ENCODE measurements at regions of chr17 and their contacts with region 1.

Region 1: DNA sequence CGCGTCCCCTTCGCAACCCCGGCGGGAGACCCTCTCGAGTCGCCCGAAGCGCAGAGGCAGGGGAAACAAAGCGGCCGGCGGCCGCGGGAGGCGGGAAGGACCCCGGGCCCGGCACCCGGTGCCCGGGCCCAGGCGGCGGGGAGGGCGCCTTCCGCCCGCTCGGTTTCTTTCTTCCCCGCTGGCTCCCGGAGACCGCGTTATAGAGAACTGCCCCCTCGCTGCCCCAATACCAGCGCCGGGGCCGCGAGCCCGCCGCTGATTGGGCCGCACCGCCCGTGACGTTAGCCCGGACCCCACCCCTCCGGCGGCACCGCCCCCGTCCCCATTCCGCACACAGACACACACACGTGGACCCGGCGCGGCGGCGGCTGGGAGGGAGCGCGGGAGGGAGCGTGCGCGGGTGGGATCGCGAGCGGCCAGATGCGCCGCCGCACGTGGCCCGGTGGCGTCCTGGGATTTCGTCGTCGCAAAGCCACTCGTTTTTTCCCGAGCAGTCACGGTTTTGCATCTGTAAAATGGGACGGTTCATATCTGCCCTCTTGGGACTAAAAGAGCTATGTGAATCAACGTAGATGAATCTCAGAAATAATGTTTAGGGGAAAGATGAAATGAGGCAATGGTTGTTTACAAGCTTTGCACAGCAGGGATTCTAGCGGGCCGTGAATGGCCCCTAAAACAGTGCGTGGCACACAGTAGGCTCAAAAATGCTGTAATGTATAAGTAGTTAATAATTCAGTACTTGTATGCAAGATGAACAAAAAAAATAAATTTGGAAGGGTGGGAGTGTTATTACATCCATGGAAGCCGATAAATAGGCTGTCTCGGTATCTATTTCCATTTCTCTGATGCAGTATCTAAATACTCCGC is at the start of gene EPOP:
- DNase-seq: peak; percentile 43
- H3K4me3 ChIP-seq: peak within 1 kb of the TSS; percentile 45
- H3K27ac ChIP-seq: no peak within 1 kb of the TSS
- H3K27me3 ChIP-seq: peaks cover 44% of the 10 kb centered on the region
- CTCF ChIP-seq: no peak
- polyA plus RNA-seq, gene EPOP: 0.16 and 0.17 TPM in 2 replicates

Region 2: GRCh38 chr17:38605888-38606645 is 68.9 kb before region 1 on chr17 and contains the start of gene SRCIN1:
- CTCF ChIA-PET with region 1: no interaction called
- POLR2A ChIA-PET with region 1: no interaction called
- DNase-seq: no peak
- H3K4me3 ChIP-seq: peak within 1 kb of the TSS; percentile 45
- H3K27ac ChIP-seq: no peak within 1 kb of the TSS
- H3K27me3 ChIP-seq: peaks cover 81% of the 10 kb centered on the region
- CTCF ChIP-seq: peak; percentile 56
- polyA plus RNA-seq, gene SRCIN1: not detected in 2 replicates

Region 3: GRCh38 chr17:38628441-38628840 is 46.5 kb before region 1 on chr17:
- CTCF ChIA-PET with region 1: no interaction called
- POLR2A ChIA-PET with region 1: no interaction called
- DNase-seq: no peak
- H3K4me3 ChIP-seq: no peak overlapping the region
- H3K27ac ChIP-seq: no peak overlapping the region
- H3K27me3 ChIP-seq: peaks cover 6% of the 10 kb centered on the region
- CTCF ChIP-seq: no peak

Region 4: DNA sequence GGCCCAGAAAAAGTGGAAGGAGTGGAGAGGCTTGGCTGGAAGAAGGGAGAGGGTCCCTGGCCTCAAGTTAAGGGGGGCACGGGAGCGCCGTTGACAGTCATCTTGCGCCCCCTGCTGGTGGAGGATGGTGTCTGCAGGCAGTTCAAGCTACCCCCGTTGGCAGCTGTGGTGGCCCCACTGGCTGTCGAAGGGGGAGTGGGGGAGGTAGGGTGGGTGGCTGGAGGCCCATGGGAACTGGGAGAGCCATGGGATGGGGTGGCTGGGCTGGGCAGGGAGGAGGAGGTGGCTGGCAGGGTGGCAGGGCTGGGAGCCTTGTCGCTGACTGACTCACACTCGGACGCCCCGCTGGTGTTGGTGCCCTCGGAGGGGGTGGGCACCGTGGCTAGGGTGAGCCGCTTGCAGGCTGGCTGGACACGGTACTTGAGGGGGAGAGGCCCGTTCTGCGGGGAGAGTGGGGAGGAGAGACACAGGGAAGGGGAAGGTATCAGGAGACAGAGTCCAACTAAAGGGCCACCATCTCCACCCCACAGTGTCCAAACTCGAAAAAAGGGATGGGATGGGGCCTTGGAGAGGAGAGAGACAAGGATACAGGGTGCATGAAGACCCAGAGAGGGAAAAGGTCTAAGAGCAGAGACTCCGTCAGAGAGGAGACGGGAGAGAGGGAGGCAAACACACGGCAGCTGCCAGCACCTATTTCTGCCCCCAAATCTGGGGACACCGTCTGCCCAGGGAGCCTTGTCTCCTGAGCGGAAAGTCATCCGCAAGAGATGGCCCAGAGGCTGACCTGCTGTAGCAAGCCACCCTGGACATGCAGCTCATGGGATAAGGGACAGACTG is 60.4 kb after region 1 on chr17:
- CTCF ChIA-PET with region 1: interaction called, 20 read pairs
- POLR2A ChIA-PET with region 1: interaction called, 3 read pairs
- DNase-seq: no peak
- H3K4me3 ChIP-seq: no peak overlapping the region
- H3K27ac ChIP-seq: no peak overlapping the region
- H3K27me3 ChIP-seq: no peaks in the 10 kb centered on the region
- CTCF ChIP-seq: peak; percentile 90

Region 5: GRCh38 chr17:38789185-38789584 is 114.2 kb after region 1 on chr17:
- CTCF ChIA-PET with region 1: no interaction called
- POLR2A ChIA-PET with region 1: no interaction called
- DNase-seq: no peak
- H3K4me3 ChIP-seq: no peak overlapping the region
- H3K27ac ChIP-seq: no peak overlapping the region
- H3K27me3 ChIP-seq: no peaks in the 10 kb centered on the region
- CTCF ChIP-seq: no peak